ENCODE measurements at regions of chr18 and their contacts with region 1.

Region 1: GRCh38 chr18:44679056-44679905 is 1.4 kb upstream of the SETBP1 start:
- DNase-seq: peak; percentile 63 to 90
- H3K4me3 ChIP-seq: peak overlapping the region; percentile 83 to 94
- H3K27ac ChIP-seq: peak overlapping the region; percentile 97 to 98
- H3K4me1 ChIP-seq: peaks cover 0 to 17% of the 10 kb centered on the region in 2 donors
- H3K27me3 ChIP-seq: no peaks in the 10 kb centered on the region
- CTCF ChIP-seq: peak; percentile 62 to 81 (median 68)

Region 2: GRCh38 chr18:44579028-44579702 is 100.1 kb before region 1 on chr18:
- intact Hi-C with region 1: loop called (anchors 5 kb)
- DNase-seq: no peak
- H3K4me3 ChIP-seq: no peak overlapping the region
- H3K27ac ChIP-seq: peak overlapping the region; percentile 60 to 61
- H3K4me1 ChIP-seq: peaks cover 6 to 15% of the 10 kb centered on the region in 2 donors
- H3K27me3 ChIP-seq: no peaks in the 10 kb centered on the region
- CTCF ChIP-seq: peak in 2 of 3 experiments; percentile 20 to 40

Region 3: DNA sequence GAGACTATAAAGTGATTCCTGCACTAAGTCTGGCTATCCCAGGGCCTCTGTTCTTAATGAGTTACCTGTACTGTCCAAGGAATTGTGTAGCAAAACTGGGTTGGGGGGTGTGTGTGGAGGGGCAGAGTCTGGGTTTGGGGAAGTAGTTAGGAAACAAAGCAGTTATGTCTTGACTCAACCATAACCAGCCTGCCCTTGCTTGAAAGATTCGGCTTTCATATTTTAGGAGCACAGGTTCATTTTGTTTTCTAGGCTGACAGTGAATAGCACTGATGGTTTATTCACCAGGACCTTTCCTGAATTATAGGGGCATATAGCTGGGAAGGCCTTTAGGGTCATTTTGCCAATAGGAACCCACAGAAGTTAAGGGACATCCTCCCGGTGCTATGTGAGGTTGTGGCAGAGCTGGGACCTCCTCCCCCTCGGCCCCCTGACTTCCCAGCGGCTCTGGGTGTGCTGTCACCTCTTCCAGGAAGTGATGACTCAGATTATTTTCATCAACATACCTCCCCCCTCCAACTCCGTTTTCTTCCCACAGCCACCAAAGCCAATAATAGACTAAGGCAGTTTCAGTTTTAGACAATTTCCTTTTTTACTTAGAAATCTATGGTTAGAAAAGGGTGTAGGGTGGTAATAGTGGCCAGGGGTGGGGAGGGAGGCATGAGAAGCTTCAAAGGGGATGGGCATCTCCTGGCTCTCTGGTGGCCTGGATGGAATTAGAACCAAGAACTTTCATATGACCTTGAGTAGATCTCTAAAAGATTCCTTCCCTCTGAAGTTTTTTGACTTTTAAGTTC is 46.2 kb after region 1 on chr18:
- intact Hi-C with region 1: loop called (anchors 5 kb)
- DNase-seq: peak in 1 of 2 donors; percentile 82
- H3K4me3 ChIP-seq: peak overlapping the region in 1 of 2 donors; percentile 26
- H3K27ac ChIP-seq: peak overlapping the region; percentile 59 to 75
- H3K4me1 ChIP-seq: peaks cover 9 to 30% of the 10 kb centered on the region in 2 donors
- H3K27me3 ChIP-seq: no peaks in the 10 kb centered on the region
- CTCF ChIP-seq: no peak

Region 4: GRCh38 chr18:44838971-44839666 is 159.8 kb after region 1 on chr18:
- intact Hi-C with region 1: loop called (anchors 5 kb)
- DNase-seq: peak; percentile 47 to 85
- H3K4me3 ChIP-seq: no peak overlapping the region
- H3K27ac ChIP-seq: peak overlapping the region; percentile 29 to 31
- H3K4me1 ChIP-seq: peaks cover 4 to 20% of the 10 kb centered on the region in 2 donors
- H3K27me3 ChIP-seq: no peaks in the 10 kb centered on the region
- CTCF ChIP-seq: no peak

Region 5: GRCh38 chr18:45014047-45014501 is 334.8 kb after region 1 on chr18:
- intact Hi-C with region 1: loop called (anchors 2 kb)
- DNase-seq: peak in 1 of 2 donors; percentile 69
- H3K4me3 ChIP-seq: no peak overlapping the region
- H3K27ac ChIP-seq: peak overlapping the region; percentile 59 to 61
- H3K4me1 ChIP-seq: peaks cover 3 to 34% of the 10 kb centered on the region in 2 donors
- H3K27me3 ChIP-seq: no peaks in the 10 kb centered on the region
- CTCF ChIP-seq: peak in 2 of 3 experiments; percentile 18 to 19

Region 6: DNA sequence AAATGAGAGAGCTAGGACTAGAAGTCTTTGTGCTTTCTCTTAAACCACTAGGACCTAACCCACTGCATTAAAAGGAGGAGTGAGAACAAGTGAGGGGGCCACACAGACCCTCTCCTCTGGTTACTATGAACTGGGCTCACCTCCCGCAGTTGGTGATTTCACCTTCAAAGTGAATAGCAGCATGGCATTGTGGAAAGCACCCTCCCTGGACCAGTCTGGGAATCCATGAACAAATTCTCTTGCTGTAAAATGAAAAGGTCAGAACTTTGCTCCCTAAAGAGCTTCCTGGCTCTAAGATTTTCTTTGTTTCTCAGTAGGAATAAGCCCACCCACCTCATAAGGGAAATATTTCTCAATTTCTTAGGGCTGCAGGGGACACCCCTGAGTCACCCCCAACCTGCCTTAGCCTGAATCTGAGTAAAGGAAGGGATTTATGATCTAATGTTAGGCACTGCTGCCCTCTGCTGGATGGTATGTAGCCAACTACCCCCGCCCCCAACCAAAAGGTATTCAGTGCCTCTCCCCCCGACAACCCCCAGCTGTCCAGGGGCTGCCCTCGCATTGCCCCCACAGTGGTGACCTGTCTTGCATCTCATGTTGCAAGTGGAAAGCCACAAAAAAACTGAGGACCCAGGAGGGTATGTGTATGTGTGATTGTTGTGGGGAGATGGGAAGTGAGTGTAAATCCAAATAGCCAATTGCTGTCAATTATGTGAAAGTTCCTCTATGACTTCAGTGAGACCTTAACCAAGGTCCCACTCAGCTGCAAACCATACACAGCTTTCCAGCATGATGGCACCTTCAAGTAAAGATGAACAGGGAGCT is 705.1 kb after region 1 on chr18:
- intact Hi-C with region 1: loop called (anchors 10 kb)
- DNase-seq: peak in 1 of 2 donors; percentile 70
- H3K4me3 ChIP-seq: no peak overlapping the region
- H3K27ac ChIP-seq: no peak overlapping the region
- H3K4me1 ChIP-seq: no peaks in the 10 kb centered on the region
- H3K27me3 ChIP-seq: no peaks in the 10 kb centered on the region
- CTCF ChIP-seq: peak; percentile 35 to 54 (median 48)

Measured in ascending aorta (tissue), 2 donors.